Mammary epithelial cell (primary cell): ENCODE measurements at regions of chr1 and their contacts with region 1.

Region 1: DNA sequence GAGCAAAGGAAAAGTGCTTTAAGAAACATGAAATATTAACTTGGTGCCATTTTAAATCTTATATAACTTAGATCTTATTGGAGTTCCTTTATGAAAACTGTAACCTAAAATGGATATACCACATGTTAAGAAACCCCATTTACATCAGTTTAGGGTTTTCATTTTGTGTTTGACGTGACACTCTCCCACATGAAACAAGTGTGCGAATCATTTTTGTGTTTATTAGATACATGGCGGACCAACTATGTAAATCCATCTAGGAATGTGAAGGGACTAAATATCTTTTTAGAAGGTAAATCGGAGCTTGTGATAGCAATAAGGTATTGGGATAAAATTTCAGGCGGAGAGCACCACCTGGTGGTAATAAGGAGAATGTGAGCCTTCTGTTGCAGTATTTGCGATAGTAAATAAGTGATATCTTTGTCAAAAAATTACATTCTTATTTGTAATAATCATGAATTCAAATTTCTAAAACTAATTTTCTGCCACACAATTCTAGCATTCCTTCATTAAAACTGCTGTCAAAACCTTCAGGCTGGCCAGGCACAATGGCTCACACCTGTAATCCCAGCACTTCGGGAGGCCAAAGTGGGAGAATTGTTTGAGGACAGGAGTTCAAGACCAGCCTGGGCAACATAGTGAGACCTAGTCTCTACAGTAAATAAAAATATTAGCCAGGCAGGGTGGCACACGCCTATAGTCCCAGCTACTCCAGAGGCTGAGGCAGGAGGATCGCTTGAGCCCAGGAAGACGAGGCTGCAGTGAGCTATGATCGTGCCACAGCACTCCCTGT is 31.3 kb downstream of the SMAP2 start:
- DNase-seq: peak; percentile 30
- H3K4me3 ChIP-seq: no peak overlapping the region
- H3K27ac ChIP-seq: no peak overlapping the region
- H3K4me1 ChIP-seq: no peaks in the 10 kb centered on the region
- H3K27me3 ChIP-seq: no peaks in the 10 kb centered on the region
- CTCF ChIP-seq: peak; percentile 72 to 79

Region 2: GRCh38 chr1:40079774-40080400 is 325.0 kb before region 1 on chr1:
- CTCF ChIA-PET with region 1: no interaction called
- dilution Hi-C with region 1: no loop called
- in situ Hi-C with region 1: no loop called
- intact Hi-C with region 1: loop called (anchors 2 kb)
- DNase-seq: no peak
- H3K4me3 ChIP-seq: no peak overlapping the region
- H3K27ac ChIP-seq: no peak overlapping the region
- H3K4me1 ChIP-seq: peaks cover 7% of the 10 kb centered on the region
- H3K27me3 ChIP-seq: no peaks in the 10 kb centered on the region
- CTCF ChIP-seq: no peak

Region 3: DNA sequence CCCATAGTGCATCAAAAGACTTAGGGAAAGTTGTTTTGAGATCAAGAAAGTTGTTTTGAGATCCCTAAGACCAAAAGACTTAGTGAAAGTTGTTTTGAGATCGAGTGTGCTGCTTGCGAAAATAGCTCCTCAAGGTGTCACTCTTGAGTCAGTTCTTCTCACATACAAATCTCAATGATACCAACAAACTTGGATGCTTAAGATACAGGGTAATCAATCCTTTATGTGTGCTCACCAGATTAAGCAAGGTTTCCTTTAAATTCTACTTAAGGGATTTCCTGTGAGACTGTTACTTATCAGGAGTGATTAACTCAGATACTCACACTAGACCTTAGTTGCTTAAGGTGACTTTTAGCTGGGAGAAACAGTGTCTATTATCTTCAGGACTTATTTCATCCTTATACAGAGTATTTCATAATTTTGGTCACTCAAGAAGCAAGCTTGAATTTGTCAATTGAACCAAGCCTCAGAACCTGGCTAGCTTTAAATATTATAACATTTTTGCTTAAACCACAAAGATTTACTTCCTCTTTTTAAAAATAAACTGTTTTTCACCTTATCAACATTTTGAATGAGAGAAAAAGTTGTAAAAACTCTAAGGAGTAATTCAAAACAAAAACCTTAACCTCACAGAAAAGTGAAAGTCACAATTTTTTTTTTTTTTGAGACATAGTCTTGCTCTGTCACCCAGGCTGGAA is 251.6 kb before region 1 on chr1:
- CTCF ChIA-PET with region 1: interaction called, 3 read pairs
- dilution Hi-C with region 1: no loop called
- in situ Hi-C with region 1: no loop called
- intact Hi-C with region 1: loop called (anchors 1 kb)
- DNase-seq: peak; percentile 40
- H3K4me3 ChIP-seq: peak overlapping the region in 1 of 3 experiments; percentile 23
- H3K27ac ChIP-seq: no peak overlapping the region
- H3K4me1 ChIP-seq: no peaks in the 10 kb centered on the region
- H3K27me3 ChIP-seq: no peaks in the 10 kb centered on the region
- CTCF ChIP-seq: peak; percentile 71 to 80

Region 4: DNA sequence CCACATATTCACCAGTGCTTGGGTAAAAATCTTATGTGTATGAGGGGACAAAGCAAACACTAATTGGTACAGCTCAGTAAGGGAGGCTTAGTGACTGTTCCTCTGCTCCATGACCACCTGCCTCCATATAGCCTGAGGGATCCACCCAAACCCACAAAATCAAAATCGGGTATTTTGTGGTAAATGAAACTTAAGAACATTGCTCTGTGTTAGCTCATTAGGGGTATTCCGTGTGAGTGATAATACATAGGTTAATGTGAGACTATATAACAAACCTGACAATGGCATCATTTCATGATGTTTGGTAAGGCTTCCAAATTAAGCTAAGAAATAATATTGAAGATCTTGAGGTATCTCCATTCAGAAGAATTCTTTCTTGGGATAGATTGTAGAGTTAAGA is 113.6 kb before region 1 on chr1:
- CTCF ChIA-PET with region 1: interaction called, 21 read pairs
- dilution Hi-C with region 1: no loop called
- in situ Hi-C with region 1: no loop called
- intact Hi-C with region 1: no loop called
- DNase-seq: no peak
- H3K4me3 ChIP-seq: no peak overlapping the region
- H3K27ac ChIP-seq: no peak overlapping the region
- H3K4me1 ChIP-seq: no peaks in the 10 kb centered on the region
- H3K27me3 ChIP-seq: no peaks in the 10 kb centered on the region
- CTCF ChIP-seq: no peak

Region 5: DNA sequence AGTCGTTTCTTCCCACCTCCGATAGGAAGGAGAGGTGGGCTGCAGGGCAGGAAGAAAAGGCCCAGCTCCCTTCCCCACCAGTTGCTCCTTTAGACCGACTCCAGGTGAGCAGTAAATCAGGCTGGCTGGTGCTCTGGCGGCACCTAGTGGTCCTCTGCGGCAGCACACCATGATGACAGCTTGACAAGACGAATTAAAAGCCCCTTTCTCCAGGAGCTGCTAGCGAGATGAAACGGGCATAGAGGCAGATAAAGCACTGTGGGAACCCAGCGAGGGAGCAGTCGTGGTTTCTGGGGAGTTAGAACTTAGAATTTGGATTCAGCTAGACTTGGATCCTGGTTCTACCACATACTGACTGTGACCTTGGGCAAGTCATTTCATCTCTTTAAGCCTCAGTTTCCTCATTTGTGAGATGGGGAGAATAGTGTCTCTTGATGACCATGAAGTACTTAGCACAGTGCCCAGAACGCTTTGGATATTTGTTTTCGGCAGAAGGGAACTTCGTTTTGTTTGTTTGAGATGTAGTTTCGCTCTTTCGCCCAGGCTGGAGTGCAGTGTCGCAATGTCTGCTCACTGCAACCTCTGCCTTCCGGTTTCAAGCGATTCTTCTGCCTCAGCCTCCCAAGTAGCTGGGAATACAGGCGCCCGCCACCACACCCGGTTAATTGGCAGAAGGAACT is 66.0 kb before region 1 on chr1:
- CTCF ChIA-PET with region 1: interaction called, 6 read pairs
- dilution Hi-C with region 1: no loop called
- in situ Hi-C with region 1: no loop called
- intact Hi-C with region 1: loop called (anchors 2 kb)
- DNase-seq: peak; percentile 60
- H3K4me3 ChIP-seq: no peak overlapping the region
- H3K27ac ChIP-seq: no peak overlapping the region
- H3K4me1 ChIP-seq: peaks cover 3% of the 10 kb centered on the region
- H3K27me3 ChIP-seq: no peaks in the 10 kb centered on the region
- CTCF ChIP-seq: peak; percentile 99 to 100

Region 6: DNA sequence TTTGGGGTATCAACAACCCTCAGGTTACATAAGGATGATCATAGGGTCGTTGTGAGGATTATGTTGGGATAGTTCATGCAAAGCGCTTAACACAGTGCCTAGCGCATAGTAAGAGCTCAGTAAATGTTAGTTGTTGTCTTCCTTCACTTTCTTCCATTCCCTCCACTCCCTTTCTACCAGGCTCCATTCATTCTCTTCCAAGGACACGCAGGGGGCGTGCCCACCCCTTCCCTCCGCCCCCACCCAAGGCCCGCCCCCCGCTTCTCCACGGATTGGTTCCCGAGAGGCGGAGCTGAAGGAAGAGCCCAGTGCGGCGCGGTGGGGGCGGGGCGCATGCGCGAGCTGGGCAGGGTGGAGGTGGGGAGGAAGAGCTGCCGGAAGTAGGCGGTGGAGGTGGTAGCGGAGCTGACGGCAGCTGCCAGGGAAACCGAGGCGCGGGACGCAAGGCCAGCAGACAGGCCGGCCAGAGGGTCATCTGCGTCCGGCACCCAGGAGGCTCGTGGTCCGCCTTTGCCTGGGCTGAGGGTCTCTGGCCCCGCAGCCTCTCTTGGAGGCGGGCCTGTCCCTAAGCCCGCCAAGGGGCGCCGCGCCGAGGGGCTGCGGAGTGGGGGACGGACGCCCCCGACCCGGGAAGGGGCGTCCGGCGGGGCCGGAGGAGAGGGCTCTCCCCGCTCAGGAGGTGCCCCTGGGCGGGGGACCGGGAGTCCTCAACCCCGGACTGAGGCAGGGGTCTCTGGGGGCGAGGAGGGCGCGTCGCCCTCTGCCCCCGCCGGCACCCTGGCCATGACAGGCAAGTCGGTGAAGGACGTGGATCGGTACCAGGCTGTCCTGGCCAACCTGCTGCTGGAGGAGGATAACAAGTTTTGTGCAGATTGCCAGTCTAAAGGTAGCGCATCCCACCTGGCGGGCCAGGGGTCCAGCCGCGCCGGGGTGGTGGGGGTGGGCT is 31.3 kb before region 1 on chr1 and contains the start of gene SMAP2:
- CTCF ChIA-PET with region 1: no interaction called
- dilution Hi-C with region 1: loop called (anchors 5 kb)
- in situ Hi-C with region 1: no loop called
- intact Hi-C with region 1: no loop called
- DNase-seq: peak; percentile 95
- H3K4me3 ChIP-seq: peak within 1 kb of the TSS; percentile 65 to 80 (median 71)
- H3K27ac ChIP-seq: peak within 1 kb of the TSS; percentile 65
- H3K4me1 ChIP-seq: peaks cover 12% of the 10 kb centered on the region
- H3K27me3 ChIP-seq: no peaks in the 10 kb centered on the region
- CTCF ChIP-seq: no peak
- total RNA-seq, gene SMAP2: 17.5 to 20.5 TPM